Activated naive CD4-positive, alpha-beta T cell treated with anti-CD3 and anti-CD28 coated beads for 36 hours (primary cell): ENCODE measurements at regions of chr6 and their contacts with region 1.

Region 1: GRCh38 chr6:43427406-43428111 is at the start of gene ABCC10:
- DNase-seq: peak; percentile 97
- H3K4me3 Mint-ChIP-seq: peak within 1 kb of the TSS; percentile 87
- H3K27ac Mint-ChIP-seq: peak within 1 kb of the TSS; percentile 86
- H3K4me1 Mint-ChIP-seq: peaks cover 21% of the 10 kb centered on the region
- H3K27me3 Mint-ChIP-seq: no peaks in the 10 kb centered on the region
- total RNA-seq, gene ABCC10: 22.7 to 26.6 TPM

Region 2: GRCh38 chr6:42771741-42772100 is 655.8 kb before region 1 on chr6:
- CTCF ChIA-PET with region 1: no interaction called
- intact Hi-C with region 1: loop called (anchors 5 kb)
- DNase-seq: no peak
- H3K4me3 Mint-ChIP-seq: peak overlapping the region; percentile 71
- H3K27ac Mint-ChIP-seq: peak overlapping the region; percentile 96
- H3K4me1 Mint-ChIP-seq: peaks cover 62% of the 10 kb centered on the region
- H3K27me3 Mint-ChIP-seq: no peaks in the 10 kb centered on the region

Region 3: GRCh38 chr6:43228951-43229802 is 198.4 kb before region 1 on chr6 and contains the start of gene DNPH1:
- CTCF ChIA-PET with region 1: no interaction called
- intact Hi-C with region 1: loop called (anchors 1 kb)
- DNase-seq: peak; percentile 79
- H3K4me3 Mint-ChIP-seq: peak within 1 kb of the TSS; percentile 90
- H3K27ac Mint-ChIP-seq: peak within 1 kb of the TSS; percentile 89
- H3K4me1 Mint-ChIP-seq: peaks cover 41% of the 10 kb centered on the region
- H3K27me3 Mint-ChIP-seq: no peaks in the 10 kb centered on the region
- total RNA-seq, gene DNPH1: 59.7 to 59.8 TPM

Region 4: GRCh38 chr6:43369174-43370022 is 58.2 kb before region 1 on chr6 and contains the start of gene ZNF318:
- CTCF ChIA-PET with region 1: interaction called, 8 read pairs
- intact Hi-C with region 1: loop called (anchors 1 kb)
- DNase-seq: peak; percentile 95
- H3K4me3 Mint-ChIP-seq: peak within 1 kb of the TSS; percentile 87
- H3K27ac Mint-ChIP-seq: peak within 1 kb of the TSS; percentile 90
- H3K4me1 Mint-ChIP-seq: peaks cover 36% of the 10 kb centered on the region
- H3K27me3 Mint-ChIP-seq: no peaks in the 10 kb centered on the region
- total RNA-seq, gene ZNF318: 9.3 to 9.9 TPM

Region 5: DNA sequence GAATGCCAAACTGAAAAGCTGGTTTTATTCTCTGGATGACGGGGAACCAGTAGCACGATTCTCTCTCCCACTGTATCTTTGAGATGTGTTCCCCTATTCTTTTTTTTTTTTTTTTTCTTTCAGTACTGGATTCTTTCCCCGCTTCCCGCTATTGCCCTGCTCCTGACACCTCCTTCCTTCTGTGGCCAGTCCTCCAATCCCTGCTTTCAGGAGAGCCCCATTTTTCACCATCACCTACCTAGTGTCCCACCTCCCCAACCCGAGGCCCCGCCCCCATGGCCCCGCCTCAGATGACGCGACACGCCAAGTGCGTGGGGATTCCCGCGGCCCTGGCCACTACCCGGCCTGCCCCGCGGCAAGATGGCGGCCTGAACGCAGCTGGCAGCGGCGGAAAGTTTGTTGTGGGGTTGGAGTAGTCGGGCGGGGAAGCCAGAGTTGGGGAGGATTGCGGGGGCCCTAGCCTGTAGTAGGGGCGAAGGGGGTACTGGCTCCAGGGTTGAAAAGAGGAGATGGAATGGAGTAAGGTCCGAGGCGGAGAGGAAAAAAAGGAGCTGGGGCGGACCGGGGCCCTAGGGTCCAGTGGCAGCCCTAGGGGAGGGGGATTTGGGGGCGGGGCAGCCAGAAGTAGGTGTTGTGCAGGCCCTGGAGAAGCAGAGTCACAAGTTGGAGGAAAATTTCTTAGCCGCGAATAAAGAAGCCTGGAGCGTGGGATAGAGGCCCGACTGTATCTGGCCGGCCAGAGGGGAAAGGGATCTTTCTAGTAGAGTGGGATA is 49.9 kb after region 1 on chr6 and contains the start of gene TJAP1:
- CTCF ChIA-PET with region 1: no interaction called
- intact Hi-C with region 1: loop called (anchors 1 kb)
- DNase-seq: peak; percentile 98
- H3K4me3 Mint-ChIP-seq: peak within 1 kb of the TSS; percentile 87
- H3K27ac Mint-ChIP-seq: peak within 1 kb of the TSS; percentile 67
- H3K4me1 Mint-ChIP-seq: peaks cover 45% of the 10 kb centered on the region
- H3K27me3 Mint-ChIP-seq: no peaks in the 10 kb centered on the region
- total RNA-seq, gene TJAP1: 23.0 to 24.6 TPM

Region 6: GRCh38 chr6:43575772-43576551 is 148.4 kb after region 1 on chr6 and contains the starts of genes POLH and XPO5:
- CTCF ChIA-PET with region 1: no interaction called
- intact Hi-C with region 1: loop called (anchors 2 kb)
- DNase-seq: peak; percentile 92
- H3K4me3 Mint-ChIP-seq: peak within 1 kb of the TSS; percentile 93
- H3K27ac Mint-ChIP-seq: peak within 1 kb of the TSS; percentile 87
- H3K4me1 Mint-ChIP-seq: peaks cover 48% of the 10 kb centered on the region
- H3K27me3 Mint-ChIP-seq: no peaks in the 10 kb centered on the region
- total RNA-seq, gene POLH: 63.3 to 68.6 TPM
- total RNA-seq, gene XPO5: 74.9 to 93.2 TPM